Activated B cell treated with CpG ODN at 0.5 μM for 24 hours (primary cell): ENCODE measurements at regions of chr7 and their contacts with region 1.

Region 1: DNA sequence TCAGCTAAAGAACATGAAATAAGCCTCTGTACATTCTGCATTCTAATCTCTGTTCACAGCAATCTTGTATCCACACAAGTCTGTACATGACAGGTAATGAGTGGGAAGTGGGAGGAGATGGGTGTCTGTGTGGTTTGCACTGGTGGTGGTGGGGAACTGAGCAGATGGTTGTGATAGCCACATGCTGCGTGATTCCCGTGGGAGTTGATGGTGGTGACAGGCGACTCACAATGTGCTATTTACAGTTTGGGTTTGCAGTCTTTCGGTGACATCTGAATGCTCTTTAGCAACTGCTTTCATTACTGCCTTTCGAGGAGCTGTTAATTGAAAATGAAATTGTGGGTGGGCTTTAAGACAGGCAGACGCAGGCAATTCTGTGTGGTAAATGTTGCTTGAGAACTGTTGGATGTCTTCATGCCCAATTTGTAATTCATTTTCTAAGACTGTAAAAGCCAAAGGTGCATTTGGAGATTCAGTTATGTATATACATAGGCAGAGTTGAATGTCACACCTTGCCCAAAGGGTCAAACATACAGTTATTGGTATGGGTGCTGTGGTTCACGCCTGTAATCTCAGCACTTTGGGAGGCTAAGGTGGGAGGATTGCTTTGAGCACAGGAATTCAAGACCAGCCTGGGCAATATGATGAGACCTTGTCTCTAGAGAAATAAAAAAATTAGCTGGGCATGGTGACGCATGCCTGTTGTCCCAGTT is 308.2 kb downstream of the AUTS2 start:
- DNase-seq: no peak
- ATAC-seq: peak; percentile 94
- H3K4me3 Mint-ChIP-seq: peak overlapping the region; percentile 9
- H3K27ac Mint-ChIP-seq: no peak overlapping the region
- H3K4me1 Mint-ChIP-seq: peaks cover 38% of the 10 kb centered on the region
- H3K27me3 Mint-ChIP-seq: no peaks in the 10 kb centered on the region
- CTCF ChIP-seq: no peak

Region 2: GRCh38 chr7:69864822-69865221 is 41.6 kb before region 1 on chr7:
- CTCF ChIA-PET with region 1: no interaction called
- POLR2A ChIA-PET with region 1: no interaction called
- intact Hi-C with region 1: no loop called
- DNase-seq: no peak
- ATAC-seq: no peak
- H3K4me3 Mint-ChIP-seq: no peak overlapping the region
- H3K27ac Mint-ChIP-seq: no peak overlapping the region
- H3K4me1 Mint-ChIP-seq: peaks cover 29% of the 10 kb centered on the region
- H3K27me3 Mint-ChIP-seq: no peaks in the 10 kb centered on the region
- CTCF ChIP-seq: no peak

Region 3: GRCh38 chr7:69922026-69922803 is 15.8 kb after region 1 on chr7:
- CTCF ChIA-PET with region 1: no interaction called
- POLR2A ChIA-PET with region 1: no interaction called
- intact Hi-C with region 1: loop called (anchors 2 kb)
- DNase-seq: no peak
- ATAC-seq: no peak
- H3K4me3 Mint-ChIP-seq: no peak overlapping the region
- H3K27ac Mint-ChIP-seq: no peak overlapping the region
- H3K4me1 Mint-ChIP-seq: peaks cover 10% of the 10 kb centered on the region
- H3K27me3 Mint-ChIP-seq: no peaks in the 10 kb centered on the region
- CTCF ChIP-seq: no peak